Endothelial cell of umbilical vein (primary cell): ENCODE measurements at regions of chr2 and their contacts with region 1.

Region 1: GRCh38 chr2:190277234-190278112 is 42.2 kb downstream of the HIBCH start:
- DNase-seq: peak; percentile 70
- H3K4me3 ChIP-seq: no peak overlapping the region
- H3K27ac ChIP-seq: peak overlapping the region; percentile 8
- H3K4me1 ChIP-seq: peaks cover 2% of the 10 kb centered on the region
- H3K27me3 ChIP-seq: no peaks in the 10 kb centered on the region
- CTCF ChIP-seq: peak; percentile 34 to 39
- POLR2A ChIP-seq: no peak

Region 2: GRCh38 chr2:190267302-190267701 is 10.2 kb before region 1 on chr2:
- CTCF ChIA-PET with region 1: interaction called, 16 read pairs
- POLR2A ChIA-PET with region 1: no interaction called
- dilution Hi-C with region 1: no loop called
- intact Hi-C with region 1: no loop called
- DNase-seq: peak; percentile 57
- H3K4me3 ChIP-seq: no peak overlapping the region
- H3K27ac ChIP-seq: no peak overlapping the region
- H3K4me1 ChIP-seq: peaks cover 7% of the 10 kb centered on the region
- H3K27me3 ChIP-seq: no peaks in the 10 kb centered on the region
- CTCF ChIP-seq: no peak
- POLR2A ChIP-seq: no peak

Region 3: DNA sequence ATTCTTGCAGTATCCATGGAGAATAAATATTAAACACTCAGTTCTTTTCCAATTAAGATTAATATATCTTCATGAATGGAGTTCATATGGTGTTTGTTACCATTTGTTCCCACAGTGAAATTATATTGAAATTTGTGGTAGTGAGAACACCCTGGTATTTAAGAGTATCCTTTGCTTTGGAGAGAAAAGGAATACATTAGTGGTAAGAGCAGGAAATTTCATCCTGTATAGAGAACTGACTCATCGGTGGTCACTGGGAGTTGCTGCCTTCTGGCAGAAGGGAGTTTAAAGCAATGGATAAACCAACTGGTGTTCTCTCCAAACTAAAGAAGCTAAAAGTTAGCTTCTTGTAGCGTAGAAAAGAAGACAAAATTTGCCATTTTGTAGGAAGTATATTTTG is 1075.1 kb after region 1 on chr2:
- CTCF ChIA-PET with region 1: no interaction called
- POLR2A ChIA-PET with region 1: no interaction called
- dilution Hi-C with region 1: no loop called
- intact Hi-C with region 1: no loop called
- DNase-seq: peak; percentile 21
- H3K4me3 ChIP-seq: no peak overlapping the region
- H3K27ac ChIP-seq: no peak overlapping the region
- H3K4me1 ChIP-seq: peaks cover 7% of the 10 kb centered on the region
- H3K27me3 ChIP-seq: no peaks in the 10 kb centered on the region
- CTCF ChIP-seq: no peak
- POLR2A ChIP-seq: no peak